ENCODE measurements at regions of chr13 and their contacts with region 1.

Region 1: GRCh38 chr13:43878892-43879754 is at the start of gene CCDC122:
- DNase-seq: peak; percentile 52 to 89 (median 76)

Region 2: DNA sequence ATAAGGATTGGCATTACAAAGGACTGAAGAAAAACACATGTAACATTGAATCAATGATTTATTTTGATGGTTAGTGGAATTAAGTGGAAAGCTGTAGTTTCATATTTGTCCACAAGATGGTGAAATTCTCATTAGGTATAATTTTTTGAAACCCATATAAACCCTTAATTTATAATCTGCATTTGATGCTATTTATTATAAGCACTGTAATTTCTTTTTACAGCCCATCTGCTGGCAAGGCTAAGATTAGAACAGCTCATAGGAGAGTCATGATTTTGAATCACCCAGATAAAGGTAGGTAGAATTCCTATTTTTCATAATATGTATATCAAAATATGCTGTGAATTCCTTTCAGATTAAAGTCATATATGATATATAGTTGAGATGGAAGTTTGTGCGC is 793.6 kb before region 1 on chr13:
- intact Hi-C with region 1: loop called (anchors 5 kb)
- DNase-seq: no peak

Measured in head of caudate nucleus (tissue), 42 donors.